Kidney (tissue), 22 donors: ENCODE measurements at regions of chr11 and their contacts with region 1.

Region 1: GRCh38 chr11:127136438-127136837 is 135.9 kb upstream of the KIRREL3 start:
- DNase-seq: no peak
- H3K4me3 ChIP-seq: no peak overlapping the region
- H3K27ac ChIP-seq: no peak overlapping the region
- H3K4me1 ChIP-seq: no peaks in the 10 kb centered on the region
- H3K27me3 ChIP-seq: no peaks in the 10 kb centered on the region
- CTCF ChIP-seq: no peak

Region 2: GRCh38 chr11:126459691-126460281 is 676.7 kb before region 1 on chr11:
- intact Hi-C with region 1: loop called (anchors 10 kb)
- DNase-seq: peak in 3 of 5 donors; percentile 24 to 81 (median 48)
- H3K4me3 ChIP-seq: no peak overlapping the region
- H3K27ac ChIP-seq: no peak overlapping the region
- H3K4me1 ChIP-seq: peaks cover 0 to 2% (median 0%) of the 10 kb centered on the region in 3 donors
- H3K27me3 ChIP-seq: no peaks in the 10 kb centered on the region
- CTCF ChIP-seq: no peak